ENCODE measurements at regions of chrX and their contacts with region 1.

Region 1: DNA sequence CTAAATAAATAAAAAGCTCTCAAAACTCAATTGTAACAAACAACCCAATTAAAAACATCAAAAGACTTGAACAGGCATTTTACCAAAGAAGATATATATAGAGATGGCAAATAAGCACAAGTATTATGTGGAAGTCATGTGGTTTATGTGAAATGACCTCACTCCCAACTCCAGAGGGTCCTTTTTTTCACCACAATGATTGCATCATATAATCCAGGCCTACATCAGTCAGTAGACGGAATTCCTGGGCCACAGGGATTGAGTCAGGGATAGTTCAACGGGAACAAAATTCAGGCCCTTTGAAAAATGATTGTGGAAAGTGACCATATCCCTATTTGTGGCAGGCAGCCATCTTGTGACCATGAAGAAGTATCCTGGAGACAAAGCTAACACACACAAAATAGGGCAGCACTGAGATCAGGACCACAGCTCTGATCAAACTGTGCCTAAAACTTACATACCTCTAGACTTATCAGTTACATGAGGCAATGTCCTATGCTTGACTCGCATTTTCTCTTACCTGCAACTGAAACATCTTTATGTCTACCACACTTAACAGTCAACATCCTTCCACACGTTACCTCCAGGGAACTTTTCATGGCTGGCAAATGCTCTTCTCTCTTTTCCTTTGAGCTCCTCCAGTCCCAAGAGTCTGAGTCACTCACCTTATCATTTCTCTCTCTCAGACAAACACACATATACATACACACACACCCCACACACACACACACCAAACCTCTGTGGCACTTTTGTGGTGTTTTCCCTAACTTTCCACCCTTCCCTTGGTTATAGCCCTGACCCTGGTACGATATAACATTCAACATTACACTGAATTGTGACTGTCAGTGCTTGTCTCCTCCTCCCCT is 113.5 kb downstream of the PHF8 start:
- DNase-seq: no peak
- H3K4me3 ChIP-seq: no peak overlapping the region
- H3K27ac ChIP-seq: no peak overlapping the region
- H3K4me1 ChIP-seq: no peaks in the 10 kb centered on the region
- H3K27me3 ChIP-seq: no peaks in the 10 kb centered on the region
- CTCF ChIP-seq: no peak

Region 2: GRCh38 chrX:53190363-53190960 is 740.3 kb before region 1 on chrX:
- CTCF ChIA-PET with region 1: no interaction called
- POLR2A ChIA-PET with region 1: no interaction called
- intact Hi-C with region 1: no loop called
- DNase-seq: no peak
- H3K4me3 ChIP-seq: no peak overlapping the region
- H3K27ac ChIP-seq: no peak overlapping the region
- H3K4me1 ChIP-seq: no peaks in the 10 kb centered on the region
- H3K27me3 ChIP-seq: no peaks in the 10 kb centered on the region
- CTCF ChIP-seq: no peak

Region 3: GRCh38 chrX:53287493-53288138 is 643.1 kb before region 1 on chrX:
- CTCF ChIA-PET with region 1: no interaction called
- POLR2A ChIA-PET with region 1: no interaction called
- intact Hi-C with region 1: no loop called
- DNase-seq: peak; percentile 45 to 55
- H3K4me3 ChIP-seq: no peak overlapping the region
- H3K27ac ChIP-seq: no peak overlapping the region
- H3K4me1 ChIP-seq: 0 out of 2 replicates have a peak, but pooled peaks cover 10% of the 10 kb centered on the region
- H3K27me3 ChIP-seq: no peaks in the 10 kb centered on the region
- CTCF ChIP-seq: no peak

Region 4: GRCh38 chrX:53864591-53864990 is 66.2 kb before region 1 on chrX:
- CTCF ChIA-PET with region 1: no interaction called
- POLR2A ChIA-PET with region 1: no interaction called
- intact Hi-C with region 1: no loop called
- DNase-seq: no peak
- H3K4me3 ChIP-seq: no peak overlapping the region
- H3K27ac ChIP-seq: no peak overlapping the region
- H3K4me1 ChIP-seq: no peaks in the 10 kb centered on the region
- H3K27me3 ChIP-seq: no peaks in the 10 kb centered on the region
- CTCF ChIP-seq: no peak

Region 5: GRCh38 chrX:53895270-53895669 is 35.5 kb before region 1 on chrX:
- CTCF ChIA-PET with region 1: no interaction called
- POLR2A ChIA-PET with region 1: no interaction called
- intact Hi-C with region 1: loop called (anchors 1 kb)
- DNase-seq: no peak
- H3K4me3 ChIP-seq: no peak overlapping the region
- H3K27ac ChIP-seq: no peak overlapping the region
- H3K4me1 ChIP-seq: no peaks in the 10 kb centered on the region
- H3K27me3 ChIP-seq: no peaks in the 10 kb centered on the region
- CTCF ChIP-seq: no peak

Region 6: GRCh38 chrX:53961861-53962260 is 31.1 kb after region 1 on chrX:
- CTCF ChIA-PET with region 1: no interaction called
- POLR2A ChIA-PET with region 1: no interaction called
- intact Hi-C with region 1: no loop called
- DNase-seq: no peak
- H3K4me3 ChIP-seq: no peak overlapping the region
- H3K27ac ChIP-seq: no peak overlapping the region
- H3K4me1 ChIP-seq: no peaks in the 10 kb centered on the region
- H3K27me3 ChIP-seq: no peaks in the 10 kb centered on the region
- CTCF ChIP-seq: no peak